Posterior vena cava (tissue), 2 donors: ENCODE measurements at regions of chr12 and their contacts with region 1.

Region 1: GRCh38 chr12:122421821-122422729 is at the start of gene CLIP1:
- DNase-seq: peak; percentile 90
- total RNA-seq, gene CLIP1: 141 to 226 TPM

Region 2: DNA sequence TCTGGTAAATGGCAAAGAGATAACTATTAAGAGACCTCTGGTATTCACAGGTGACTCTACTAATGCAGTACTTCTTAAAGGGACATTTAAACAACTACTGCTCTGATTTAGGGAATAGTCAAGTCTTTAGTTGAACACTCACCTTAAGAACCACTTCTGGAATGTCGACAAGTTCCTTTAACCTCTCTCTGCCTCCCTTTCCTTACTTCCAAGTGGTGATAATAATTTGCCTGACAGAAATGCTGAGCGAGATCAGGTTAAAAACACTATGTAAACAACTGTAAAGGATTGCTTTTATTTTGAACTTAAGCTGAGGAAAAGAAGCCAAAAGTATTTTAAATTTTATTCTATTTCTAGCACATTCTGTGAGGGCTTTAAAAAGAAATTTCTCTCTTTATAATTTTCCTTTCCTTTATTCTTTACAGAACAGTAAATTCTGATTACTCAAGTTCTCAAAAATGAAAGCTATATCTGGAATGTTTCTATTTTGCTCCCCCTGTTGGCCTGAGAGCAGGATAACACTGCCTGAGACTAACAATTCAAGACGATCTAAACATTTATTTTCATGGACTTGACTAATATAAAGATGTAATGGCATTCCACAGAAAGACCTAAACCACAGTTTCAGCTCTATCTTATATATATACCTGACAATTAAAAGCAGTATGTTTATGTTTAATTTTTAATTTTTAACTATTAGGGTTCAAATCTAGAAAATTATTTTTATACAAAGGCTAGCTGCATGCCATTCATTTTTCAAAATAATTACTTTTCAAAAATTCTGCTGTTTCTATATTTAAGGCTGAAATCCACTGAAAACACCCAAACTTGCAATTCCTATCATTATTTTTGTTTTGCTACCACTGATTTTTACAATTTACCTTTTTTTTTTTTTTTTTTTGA is 49.5 kb after region 1 on chr12:
- intact Hi-C with region 1: loop called in 1 of 2 experiments (anchors 5 kb)
- DNase-seq: no peak

Region 3: DNA sequence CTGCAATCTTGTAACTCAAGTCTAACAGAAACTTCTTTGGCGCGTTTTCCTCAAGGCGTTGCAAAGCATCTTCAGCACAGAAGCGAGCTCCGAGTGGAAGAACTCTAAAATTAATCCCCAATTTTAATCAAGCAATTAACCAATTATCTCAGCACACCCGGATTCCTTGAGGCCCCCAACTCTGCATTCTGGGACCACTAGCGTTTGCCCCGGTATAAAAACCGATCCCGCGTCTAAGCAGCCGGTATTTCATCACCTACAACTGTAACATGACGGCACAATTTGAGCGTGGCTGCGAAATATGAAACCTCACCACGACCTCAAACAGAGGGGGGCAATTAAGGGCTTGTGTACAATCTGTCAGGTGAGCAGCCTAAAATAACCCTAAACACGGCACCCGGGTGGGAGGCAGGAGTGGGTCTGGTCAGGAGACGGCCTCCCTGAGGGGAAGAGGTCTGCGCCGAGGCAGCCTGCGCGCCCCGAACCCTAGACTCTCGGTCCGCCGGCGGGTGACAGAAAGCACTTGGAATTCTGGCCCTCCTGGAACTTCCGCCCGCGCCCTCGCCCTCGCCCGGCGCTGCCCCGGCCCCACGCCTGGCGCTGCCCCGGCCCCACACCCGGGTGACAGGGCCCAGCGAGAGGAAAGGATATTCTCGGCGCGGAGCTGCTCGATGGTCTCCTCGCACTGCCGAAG is 78.1 kb after region 1 on chr12:
- intact Hi-C with region 1: loop called in 1 of 2 experiments (anchors 2 kb)
- DNase-seq: peak; percentile 84

Region 4: DNA sequence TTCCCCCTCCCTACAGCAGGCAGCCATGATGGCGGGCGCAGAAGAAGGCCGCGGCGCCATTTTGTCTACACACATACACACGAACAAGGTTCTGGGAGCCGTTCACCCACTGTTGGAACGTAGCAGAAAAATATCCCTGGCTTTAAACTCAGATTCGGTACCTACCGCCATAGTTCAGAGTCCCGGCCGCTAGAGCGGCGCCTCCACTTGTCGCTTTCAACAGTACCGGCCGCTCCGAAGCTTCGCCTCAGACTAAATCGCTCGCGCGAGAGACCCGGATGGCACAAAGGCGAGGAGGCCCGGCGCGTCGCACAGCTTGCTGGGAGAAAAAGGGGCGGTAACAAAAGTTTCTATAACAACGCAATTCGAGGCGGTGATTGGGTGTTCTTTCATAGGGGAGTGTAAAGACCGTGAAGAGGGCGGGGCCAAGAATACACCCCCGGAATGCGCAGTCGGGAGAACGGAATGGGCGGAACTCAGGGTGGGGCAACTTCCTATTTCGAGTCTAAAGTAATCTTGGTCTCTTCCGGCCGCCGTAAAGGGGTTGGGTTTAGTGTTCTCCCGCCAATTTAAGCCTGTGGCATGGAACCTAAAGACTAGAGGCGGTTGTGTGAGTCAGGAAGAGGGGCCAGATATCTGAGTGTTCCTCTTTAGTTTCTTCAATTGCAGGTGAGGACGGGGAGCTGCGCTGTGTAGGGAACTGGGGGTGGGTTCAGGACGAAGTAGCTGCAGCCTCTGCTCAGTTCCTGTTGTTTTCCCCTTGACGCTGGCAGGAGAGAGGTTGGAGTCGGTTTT is 104.8 kb after region 1 on chr12 and contains the starts of genes KNTC1 and RSRC2:
- intact Hi-C with region 1: no loop called
- DNase-seq: peak; percentile 98
- total RNA-seq, gene KNTC1: 10.9 to 12.3 TPM
- total RNA-seq, gene RSRC2: 52.5 to 60.6 TPM